PC-9 (cell line): ENCODE measurements at regions of chr15 and their contacts with region 1.

Region 1: GRCh38 chr15:73240866-73241499 is 127.8 kb downstream of the HCN4 start:
- DNase-seq: peak; percentile 49 to 53
- H3K4me3 ChIP-seq: no peak overlapping the region
- H3K27ac ChIP-seq: no peak overlapping the region
- H3K4me1 ChIP-seq: no peaks in the 10 kb centered on the region
- H3K27me3 ChIP-seq: no peaks in the 10 kb centered on the region
- CTCF ChIP-seq: peak; percentile 93

Region 2: DNA sequence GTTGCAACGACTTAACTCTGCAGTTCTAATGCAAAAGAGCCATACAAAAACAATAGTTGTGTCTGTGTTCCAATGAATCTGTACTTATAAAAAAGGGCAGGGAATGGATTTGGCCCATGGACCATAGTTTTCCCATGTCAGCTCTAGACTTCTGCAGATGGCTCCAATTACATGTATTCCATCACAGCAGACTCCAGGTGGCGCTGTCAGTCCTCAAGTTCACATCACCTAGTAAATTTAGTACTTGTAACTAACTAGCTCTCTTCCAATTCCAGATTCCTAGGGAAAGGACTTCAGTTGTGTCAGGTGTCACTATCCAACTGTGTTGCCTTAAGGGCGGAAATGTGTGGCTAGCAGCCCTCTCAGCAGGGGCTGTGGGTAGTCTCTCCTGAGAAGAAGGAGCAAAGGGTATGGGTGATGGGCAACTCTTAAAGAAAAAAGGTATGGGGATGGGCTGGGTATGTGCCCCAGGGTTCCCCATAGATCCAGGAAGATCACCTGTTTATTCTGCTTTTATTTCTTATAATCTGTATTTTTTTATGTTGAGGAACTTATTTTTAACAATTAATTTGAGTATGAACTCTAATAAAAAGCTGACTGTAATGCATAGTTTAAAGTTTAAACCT is 518.8 kb before region 1 on chr15:
- CTCF ChIA-PET with region 1: no interaction called
- POLR2A ChIA-PET with region 1: no interaction called
- intact Hi-C with region 1: loop called (anchors 10 kb)
- DNase-seq: peak; percentile 44 to 53
- H3K4me3 ChIP-seq: no peak overlapping the region
- H3K27ac ChIP-seq: no peak overlapping the region
- H3K4me1 ChIP-seq: no peaks in the 10 kb centered on the region
- H3K27me3 ChIP-seq: no peaks in the 10 kb centered on the region
- CTCF ChIP-seq: peak; percentile 86

Region 3: GRCh38 chr15:73175382-73175781 is 65.6 kb before region 1 on chr15:
- CTCF ChIA-PET with region 1: no interaction called
- POLR2A ChIA-PET with region 1: interaction called, 12 read pairs
- intact Hi-C with region 1: no loop called
- DNase-seq: no peak
- H3K4me3 ChIP-seq: no peak overlapping the region
- H3K27ac ChIP-seq: no peak overlapping the region
- H3K4me1 ChIP-seq: no peaks in the 10 kb centered on the region
- H3K27me3 ChIP-seq: no peaks in the 10 kb centered on the region
- CTCF ChIP-seq: no peak